GM12878 (cell line): ENCODE measurements at regions of chr5 and their contacts with region 1.

Region 1: GRCh38 chr5:119501671-119502182 is 49.4 kb downstream of the HSD17B4 start:
- DNase-seq: no peak
- ATAC-seq: no peak
- H3K4me3 ChIP-seq: no peak overlapping the region
- H3K27ac ChIP-seq: no peak overlapping the region
- H3K4me1 ChIP-seq: no peaks in the 10 kb centered on the region
- H3K27me3 ChIP-seq: no peaks in the 10 kb centered on the region
- CTCF ChIP-seq: no peak
- EP300 ChIP-seq: no peak
- POLR2A ChIP-seq: no peak
- RAD21 ChIP-seq: no peak

Region 2: GRCh38 chr5:119483155-119483554 is 18.6 kb before region 1 on chr5:
- CTCF ChIA-PET with region 1: no interaction called
- POLR2A ChIA-PET with region 1: no interaction called
- RAD21 ChIA-PET with region 1: no interaction called
- SMC1A ChIA-PET with region 1: interaction called, 10 read pairs
- in situ Hi-C with region 1: no loop called
- intact Hi-C with region 1: no loop called
- DNase-seq: no peak
- ATAC-seq: no peak
- H3K4me3 ChIP-seq: no peak overlapping the region
- H3K27ac ChIP-seq: no peak overlapping the region
- H3K4me1 ChIP-seq: no peaks in the 10 kb centered on the region
- H3K27me3 ChIP-seq: no peaks in the 10 kb centered on the region
- CTCF ChIP-seq: no peak
- EP300 ChIP-seq: no peak
- POLR2A ChIP-seq: no peak
- RAD21 ChIP-seq: no peak